Activated CD4-positive, alpha-beta memory T cell treated with anti-CD3 and anti-CD28 coated beads, Interleukin-2, amount 10 ng/mL, durations not matched to agents 7 days and 5 days (primary cell): ENCODE measurements at regions of chr12 and their contacts with region 1.

Region 1: DNA sequence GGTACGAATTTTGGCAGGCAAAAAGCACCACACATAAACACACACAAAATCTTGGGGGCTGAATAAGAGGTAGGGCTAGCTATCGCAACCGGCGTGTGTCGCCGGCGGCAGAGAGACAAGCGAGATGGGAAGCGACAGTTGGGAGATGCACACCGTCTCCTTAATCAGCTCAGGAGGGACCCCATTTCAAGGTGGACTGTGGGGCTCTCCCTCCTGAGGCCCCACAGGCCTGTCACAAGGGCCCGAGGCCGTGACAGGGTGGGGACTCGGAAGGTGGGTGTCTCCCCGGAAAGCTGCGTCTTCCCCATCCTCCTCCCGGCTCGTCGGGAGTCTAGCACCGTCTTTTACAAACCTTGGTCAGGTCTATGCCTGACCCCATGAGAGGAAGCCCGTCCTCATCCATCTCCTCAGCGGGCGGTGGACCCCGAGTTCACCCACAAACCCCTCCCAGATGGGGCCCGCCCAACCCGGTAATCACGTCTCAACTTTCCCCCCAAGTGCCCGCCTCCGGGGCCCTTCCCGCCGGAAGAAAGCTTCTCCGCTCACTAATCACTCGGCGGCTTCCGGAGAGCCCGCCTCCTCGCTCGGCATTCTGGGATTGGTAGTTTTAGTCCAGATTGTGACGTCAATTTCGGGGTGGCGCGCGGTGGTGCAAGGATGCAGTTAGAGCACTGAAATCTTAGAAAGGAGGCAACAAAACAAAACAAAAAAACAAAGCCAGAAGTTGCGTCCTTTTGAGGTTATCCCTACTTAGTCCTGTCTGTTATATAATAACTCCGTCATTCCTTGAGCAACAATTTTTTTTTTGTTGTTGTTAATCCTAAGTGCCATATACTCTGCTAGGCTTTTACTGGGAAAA is at the start of gene WASHC3:
- DNase-seq: peak; percentile 97
- H3K4me3 Mint-ChIP-seq: peak within 1 kb of the TSS; percentile 82
- H3K27ac Mint-ChIP-seq: peak within 1 kb of the TSS; percentile 89
- H3K4me1 Mint-ChIP-seq: peaks cover 49% of the 10 kb centered on the region
- H3K27me3 Mint-ChIP-seq: no peaks in the 10 kb centered on the region
- total RNA-seq, gene WASHC3: 53.4 to 54.7 TPM

Region 2: DNA sequence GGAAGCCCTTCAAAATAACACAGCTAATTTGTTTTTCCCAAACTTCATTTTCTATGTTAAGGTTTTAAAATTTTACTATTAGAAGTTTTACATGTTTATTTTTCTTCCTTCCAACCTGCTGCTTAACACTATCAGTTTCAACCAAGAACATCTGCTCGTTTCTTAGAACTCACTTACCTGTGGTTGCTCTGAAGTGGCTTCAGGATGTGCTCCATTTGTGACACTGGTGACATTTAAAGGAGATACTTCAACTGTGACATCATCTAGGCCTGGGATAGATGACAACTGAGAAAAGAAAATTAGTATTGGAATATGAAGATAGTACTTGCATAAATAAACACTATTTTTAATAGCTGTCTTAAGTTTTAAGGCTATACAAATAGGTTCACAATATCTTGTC is 17.9 kb before region 1 on chr12:
- CTCF ChIA-PET with region 1: no interaction called
- POLR2A ChIA-PET with region 1: interaction called, 23 read pairs
- DNase-seq: no peak
- H3K4me3 Mint-ChIP-seq: no peak overlapping the region
- H3K27ac Mint-ChIP-seq: peak overlapping the region; percentile 26
- H3K4me1 Mint-ChIP-seq: peaks cover 15% of the 10 kb centered on the region
- H3K27me3 Mint-ChIP-seq: no peaks in the 10 kb centered on the region

Region 3: DNA sequence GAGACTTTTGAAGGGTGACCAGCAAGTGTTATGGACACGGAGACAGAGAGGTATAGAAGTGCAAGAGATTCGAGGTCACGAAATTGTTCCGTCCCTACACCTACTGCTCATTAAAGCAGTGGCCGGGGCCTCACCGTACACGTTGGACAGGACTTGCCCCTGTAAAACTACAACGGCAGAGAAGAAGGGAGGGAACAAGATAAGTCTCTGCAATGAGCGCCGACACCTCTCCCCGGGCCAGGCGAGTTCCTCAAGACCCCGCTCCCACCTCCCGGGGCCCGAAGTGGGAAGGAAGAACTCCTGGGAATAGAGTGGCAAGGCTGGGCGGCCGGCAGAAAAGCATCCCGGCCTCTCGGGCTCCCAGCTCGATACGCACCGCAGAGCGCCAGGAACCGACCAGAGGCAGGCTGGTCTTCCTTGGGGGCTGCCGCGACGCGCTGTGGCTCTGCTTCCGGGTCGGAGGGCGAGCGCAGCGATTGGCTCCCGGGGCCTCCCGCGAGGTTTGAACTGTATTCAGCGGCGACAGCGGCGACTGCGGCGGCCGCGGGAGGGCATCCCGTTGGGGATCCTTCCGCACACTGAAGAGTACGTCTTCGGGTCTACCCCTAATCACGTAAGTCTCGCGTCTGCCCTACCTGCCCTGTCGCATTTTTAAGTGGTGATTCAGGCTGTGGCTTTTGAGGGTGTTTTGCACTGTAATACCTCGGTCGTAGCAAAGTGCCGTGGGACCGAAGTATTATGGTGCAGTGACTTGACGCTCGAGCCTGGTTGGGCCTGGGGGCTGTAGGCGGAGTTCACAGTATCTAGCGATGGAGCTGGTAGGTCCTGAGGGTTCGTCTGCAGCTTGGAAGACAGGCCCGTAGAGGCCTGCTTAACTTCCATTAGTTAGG is 58.1 kb after region 1 on chr12 and contains the starts of genes NUP37 and PARPBP:
- CTCF ChIA-PET with region 1: interaction called, 5 read pairs
- POLR2A ChIA-PET with region 1: interaction called, 48 read pairs
- DNase-seq: peak; percentile 94
- H3K4me3 Mint-ChIP-seq: peak within 1 kb of the TSS; percentile 91
- H3K27ac Mint-ChIP-seq: peak within 1 kb of the TSS; percentile 91
- H3K4me1 Mint-ChIP-seq: peaks cover 41% of the 10 kb centered on the region
- H3K27me3 Mint-ChIP-seq: no peaks in the 10 kb centered on the region
- total RNA-seq, gene NUP37: 59.9 to 65.9 TPM
- total RNA-seq, gene PARPBP: 18.8 to 25.3 TPM

Region 4: DNA sequence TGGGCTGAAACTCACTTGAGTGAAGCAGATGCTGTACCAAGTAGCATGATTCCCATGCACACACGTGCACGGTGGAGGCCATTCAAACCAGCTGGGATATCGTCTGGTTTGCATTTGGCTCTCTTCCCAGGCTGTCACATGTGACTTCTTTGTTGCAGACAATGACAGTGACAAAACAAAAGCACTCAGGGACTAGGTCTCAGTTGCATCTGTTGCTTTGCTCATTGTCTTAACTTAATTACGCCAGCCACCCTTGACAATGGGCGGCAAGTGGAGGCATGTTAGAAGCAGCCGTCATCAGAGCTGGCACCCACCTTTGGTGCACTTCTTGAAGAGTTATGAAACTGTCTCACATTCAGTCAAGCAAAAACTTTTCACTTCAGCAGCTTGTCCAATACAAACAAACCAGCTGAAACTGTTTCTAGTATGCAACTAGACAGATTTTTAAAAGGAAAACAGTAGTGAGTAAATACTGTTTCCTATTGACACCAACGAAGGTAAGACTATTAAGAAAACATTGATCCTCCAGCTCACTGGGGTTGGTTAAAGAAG is 344.3 kb after region 1 on chr12:
- CTCF ChIA-PET with region 1: no interaction called
- POLR2A ChIA-PET with region 1: no interaction called
- DNase-seq: no peak
- H3K4me3 Mint-ChIP-seq: no peak overlapping the region
- H3K27ac Mint-ChIP-seq: no peak overlapping the region
- H3K4me1 Mint-ChIP-seq: no peaks in the 10 kb centered on the region
- H3K27me3 Mint-ChIP-seq: peaks cover 3% of the 10 kb centered on the region